ENCODE measurements at regions of chr3 and their contacts with region 1.

Region 1: GRCh38 chr3:121545574-121546455 is at the start of gene POLQ:
- DNase-seq: peak; percentile 91
- ATAC-seq: peak; percentile 91
- H3K4me3 ChIP-seq: peak within 1 kb of the TSS; percentile 66 to 98 (median 79)
- H3K4me3 Mint-ChIP-seq: peak within 1 kb of the TSS; percentile 88
- H3K27ac ChIP-seq: peak within 1 kb of the TSS; percentile 55 to 83
- H3K27ac Mint-ChIP-seq: peak within 1 kb of the TSS; percentile 93
- H3K4me1 ChIP-seq: peaks cover 20 to 27% of the 10 kb centered on the region in 2 donors
- H3K4me1 Mint-ChIP-seq: peaks cover 27% of the 10 kb centered on the region
- H3K27me3 ChIP-seq: no peaks in the 10 kb centered on the region
- H3K27me3 Mint-ChIP-seq: no peaks in the 10 kb centered on the region
- CTCF ChIP-seq: no peak
- total RNA-seq, gene POLQ: 0.79 and 0.97 TPM in 2 replicates

Region 2: DNA sequence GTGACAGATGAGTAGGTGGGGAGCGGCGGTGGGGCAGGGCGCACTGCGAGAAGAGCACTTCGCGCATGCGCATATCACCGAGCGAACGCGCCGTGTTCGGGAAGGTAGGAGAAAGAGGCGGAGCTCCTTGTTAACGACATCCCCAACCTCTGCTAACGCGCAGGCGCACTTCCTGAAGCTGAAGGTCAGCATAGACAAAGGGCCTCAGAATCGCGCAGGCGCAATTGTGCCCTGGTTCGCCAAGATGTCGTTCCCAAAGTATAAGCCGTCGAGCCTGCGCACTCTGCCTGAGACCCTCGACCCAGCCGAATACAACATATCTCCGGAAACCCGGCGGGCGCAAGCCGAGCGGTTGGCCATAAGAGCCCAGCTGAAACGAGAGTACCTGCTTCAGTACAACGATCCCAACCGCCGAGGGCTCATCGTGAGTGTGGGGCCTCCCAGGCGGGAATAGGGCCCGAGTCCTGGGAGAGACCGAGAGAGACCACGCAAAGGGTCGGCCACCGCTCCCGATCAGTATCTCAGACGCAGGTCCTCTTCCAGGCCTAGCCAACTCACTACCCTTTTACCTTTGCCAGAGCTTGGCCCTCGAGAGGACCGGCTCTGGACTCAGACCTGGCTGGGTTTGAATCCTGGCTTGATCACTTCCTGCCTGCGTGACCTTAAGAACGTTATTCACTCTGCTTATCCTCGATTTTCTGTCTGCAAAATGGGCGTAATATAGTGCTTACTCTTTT is 949.5 kb before region 1 on chr3 and contains the start of gene NDUFB4:
- CTCF ChIA-PET with region 1: no interaction called
- POLR2A ChIA-PET with region 1: no interaction called
- intact Hi-C with region 1: loop called (anchors 10 kb)
- DNase-seq: peak; percentile 97
- ATAC-seq: peak; percentile 97
- H3K4me3 ChIP-seq: peak within 1 kb of the TSS; percentile 59 to 94 (median 86)
- H3K4me3 Mint-ChIP-seq: peak within 1 kb of the TSS; percentile 92
- H3K27ac ChIP-seq: peak within 1 kb of the TSS; percentile 72 to 95
- H3K27ac Mint-ChIP-seq: peak within 1 kb of the TSS; percentile 96
- H3K4me1 ChIP-seq: peaks cover 15 to 19% of the 10 kb centered on the region in 2 donors
- H3K4me1 Mint-ChIP-seq: peaks cover 11% of the 10 kb centered on the region
- H3K27me3 ChIP-seq: no peaks in the 10 kb centered on the region
- H3K27me3 Mint-ChIP-seq: no peaks in the 10 kb centered on the region
- CTCF ChIP-seq: no peak
- total RNA-seq, gene NDUFB4: 58.1 and 68.4 TPM in 2 replicates

Region 3: GRCh38 chr3:121330634-121331033 is 215.2 kb before region 1 on chr3:
- CTCF ChIA-PET with region 1: no interaction called
- POLR2A ChIA-PET with region 1: no interaction called
- intact Hi-C with region 1: no loop called
- DNase-seq: no peak
- ATAC-seq: no peak
- H3K4me3 ChIP-seq: no peak overlapping the region
- H3K4me3 Mint-ChIP-seq: no peak overlapping the region
- H3K27ac ChIP-seq: no peak overlapping the region
- H3K27ac Mint-ChIP-seq: no peak overlapping the region
- H3K4me1 ChIP-seq: no peaks in the 10 kb centered on the region
- H3K4me1 Mint-ChIP-seq: no peaks in the 10 kb centered on the region
- H3K27me3 ChIP-seq: peaks cover 0 to 3% (median 0%) of the 10 kb centered on the region in 4 experiments
- H3K27me3 Mint-ChIP-seq: peaks cover 17% of the 10 kb centered on the region
- CTCF ChIP-seq: no peak

Region 4: GRCh38 chr3:122092460-122093165 is 546.8 kb after region 1 on chr3:
- CTCF ChIA-PET with region 1: interaction called, 3 read pairs
- POLR2A ChIA-PET with region 1: no interaction called
- intact Hi-C with region 1: loop called (anchors 5 kb)
- DNase-seq: peak; percentile 40
- ATAC-seq: peak; percentile 34
- H3K4me3 ChIP-seq: no peak overlapping the region
- H3K4me3 Mint-ChIP-seq: peak overlapping the region; percentile 74
- H3K27ac ChIP-seq: peak overlapping the region in 1 of 2 donors; percentile 60
- H3K27ac Mint-ChIP-seq: peak overlapping the region; percentile 81
- H3K4me1 ChIP-seq: peaks cover 23 to 27% of the 10 kb centered on the region in 2 donors
- H3K4me1 Mint-ChIP-seq: peaks cover 37% of the 10 kb centered on the region
- H3K27me3 ChIP-seq: no peaks in the 10 kb centered on the region
- H3K27me3 Mint-ChIP-seq: no peaks in the 10 kb centered on the region
- CTCF ChIP-seq: peak; percentile 36

Region 5: DNA sequence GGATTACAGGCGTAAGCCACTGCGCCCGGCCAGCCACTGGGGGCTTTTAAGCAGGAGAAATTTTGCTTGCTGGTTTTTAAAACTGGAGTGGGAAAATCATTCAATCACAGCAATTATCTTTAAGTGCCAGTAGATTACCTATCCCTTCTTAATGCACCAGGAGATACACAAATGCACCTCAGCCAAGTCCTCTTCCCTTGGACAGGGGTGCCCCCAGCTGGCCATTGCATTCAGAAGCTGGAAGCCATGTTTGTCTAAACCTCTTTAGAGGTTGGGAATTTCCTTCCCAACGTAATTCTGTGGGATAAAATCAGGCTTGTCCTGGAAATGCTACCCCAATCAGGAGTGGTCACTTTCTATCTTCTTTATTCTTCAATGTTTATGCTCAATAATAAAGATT is 810.6 kb after region 1 on chr3:
- CTCF ChIA-PET with region 1: interaction called, 6 read pairs
- POLR2A ChIA-PET with region 1: interaction called, 4 read pairs
- intact Hi-C with region 1: loop called (anchors 1 kb)
- DNase-seq: peak; percentile 20
- ATAC-seq: no peak
- H3K4me3 ChIP-seq: no peak overlapping the region
- H3K4me3 Mint-ChIP-seq: no peak overlapping the region
- H3K27ac ChIP-seq: no peak overlapping the region
- H3K27ac Mint-ChIP-seq: no peak overlapping the region
- H3K4me1 ChIP-seq: no peaks in the 10 kb centered on the region
- H3K4me1 Mint-ChIP-seq: no peaks in the 10 kb centered on the region
- H3K27me3 ChIP-seq: no peaks in the 10 kb centered on the region
- H3K27me3 Mint-ChIP-seq: no peaks in the 10 kb centered on the region
- CTCF ChIP-seq: peak; percentile 31

Region 6: DNA sequence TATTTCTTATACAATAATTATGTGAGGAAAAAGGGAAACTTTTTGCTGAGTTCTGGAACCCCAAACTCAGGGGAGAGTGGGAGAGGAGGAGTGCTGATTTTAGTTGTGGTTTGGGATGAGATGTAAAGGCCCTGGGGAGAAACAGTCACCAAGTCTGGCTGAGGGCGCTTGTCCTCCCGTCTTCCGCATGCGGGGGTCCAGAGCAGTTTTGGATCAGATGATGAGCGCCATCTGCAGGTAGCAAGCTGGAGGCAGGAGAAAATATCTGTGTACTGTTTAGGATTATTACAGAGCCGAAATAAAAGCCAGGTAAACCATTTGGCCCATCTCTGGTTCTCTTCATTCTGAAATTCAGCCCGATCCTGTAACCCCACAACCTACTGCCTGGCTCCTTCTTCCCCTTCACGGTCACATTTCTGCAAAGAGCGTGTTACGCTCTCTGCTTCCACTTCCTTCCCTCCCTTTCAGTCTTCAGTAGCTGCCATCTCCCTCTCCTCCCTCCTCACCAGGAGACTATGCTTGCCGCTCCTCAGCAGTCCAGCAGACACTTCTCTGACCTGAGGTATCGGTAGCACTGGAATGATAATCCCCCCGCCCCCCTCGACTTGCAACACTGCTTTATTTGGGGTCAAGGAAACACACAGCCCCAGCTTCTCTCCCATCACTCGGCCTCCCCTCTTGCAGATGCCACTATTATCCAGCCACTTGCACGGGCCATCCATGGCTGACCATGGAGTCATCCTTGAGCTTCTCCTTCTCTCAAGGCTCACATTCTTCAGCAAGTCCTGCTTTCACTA is 1133.5 kb after region 1 on chr3:
- CTCF ChIA-PET with region 1: interaction called, 4 read pairs
- POLR2A ChIA-PET with region 1: no interaction called
- intact Hi-C with region 1: loop called (anchors 2 kb)
- DNase-seq: peak; percentile 87
- ATAC-seq: peak; percentile 38
- H3K4me3 ChIP-seq: peak overlapping the region; percentile 50 to 96 (median 84)
- H3K4me3 Mint-ChIP-seq: peak overlapping the region; percentile 90
- H3K27ac ChIP-seq: peak overlapping the region; percentile 97 to 98
- H3K27ac Mint-ChIP-seq: peak overlapping the region; percentile 92
- H3K4me1 ChIP-seq: peaks cover 48 to 59% of the 10 kb centered on the region in 2 donors
- H3K4me1 Mint-ChIP-seq: peaks cover 61% of the 10 kb centered on the region
- H3K27me3 ChIP-seq: no peaks in the 10 kb centered on the region
- H3K27me3 Mint-ChIP-seq: no peaks in the 10 kb centered on the region
- CTCF ChIP-seq: peak; percentile 77

Region 7: GRCh38 chr3:123028233-123028828 is 1482.5 kb after region 1 on chr3:
- CTCF ChIA-PET with region 1: interaction called, 20 read pairs
- POLR2A ChIA-PET with region 1: no interaction called
- intact Hi-C with region 1: loop called (anchors 1 kb)
- DNase-seq: peak; percentile 71
- ATAC-seq: peak; percentile 25
- H3K4me3 ChIP-seq: peak overlapping the region; percentile 44 to 72 (median 57)
- H3K4me3 Mint-ChIP-seq: peak overlapping the region; percentile 94
- H3K27ac ChIP-seq: no peak overlapping the region
- H3K27ac Mint-ChIP-seq: no peak overlapping the region
- H3K4me1 ChIP-seq: peaks cover 21% of the 10 kb centered on the region in 2 donors
- H3K4me1 Mint-ChIP-seq: peaks cover 20% of the 10 kb centered on the region
- H3K27me3 ChIP-seq: peaks cover 0 to 71% (median 43%) of the 10 kb centered on the region in 4 experiments
- H3K27me3 Mint-ChIP-seq: peaks cover 49% of the 10 kb centered on the region
- CTCF ChIP-seq: peak; percentile 48